OCI-LY7 (cell line): ENCODE measurements at regions of chr1 and their contacts with region 1.

Region 1: GRCh38 chr1:45887156-45887842 is 83.9 kb downstream of the MAST2 start:
- DNase-seq: no peak
- H3K4me3 ChIP-seq: no peak overlapping the region
- H3K27ac ChIP-seq: no peak overlapping the region
- H3K4me1 ChIP-seq: no peaks in the 10 kb centered on the region
- CTCF ChIP-seq: no peak

Region 2: GRCh38 chr1:45906883-45907282 is 19.6 kb after region 1 on chr1:
- CTCF ChIA-PET with region 1: no interaction called
- POLR2A ChIA-PET with region 1: interaction called, 15 read pairs
- intact Hi-C with region 1: no loop called
- DNase-seq: no peak
- H3K4me3 ChIP-seq: no peak overlapping the region
- H3K27ac ChIP-seq: no peak overlapping the region
- H3K4me1 ChIP-seq: no peaks in the 10 kb centered on the region
- CTCF ChIP-seq: no peak

Region 3: DNA sequence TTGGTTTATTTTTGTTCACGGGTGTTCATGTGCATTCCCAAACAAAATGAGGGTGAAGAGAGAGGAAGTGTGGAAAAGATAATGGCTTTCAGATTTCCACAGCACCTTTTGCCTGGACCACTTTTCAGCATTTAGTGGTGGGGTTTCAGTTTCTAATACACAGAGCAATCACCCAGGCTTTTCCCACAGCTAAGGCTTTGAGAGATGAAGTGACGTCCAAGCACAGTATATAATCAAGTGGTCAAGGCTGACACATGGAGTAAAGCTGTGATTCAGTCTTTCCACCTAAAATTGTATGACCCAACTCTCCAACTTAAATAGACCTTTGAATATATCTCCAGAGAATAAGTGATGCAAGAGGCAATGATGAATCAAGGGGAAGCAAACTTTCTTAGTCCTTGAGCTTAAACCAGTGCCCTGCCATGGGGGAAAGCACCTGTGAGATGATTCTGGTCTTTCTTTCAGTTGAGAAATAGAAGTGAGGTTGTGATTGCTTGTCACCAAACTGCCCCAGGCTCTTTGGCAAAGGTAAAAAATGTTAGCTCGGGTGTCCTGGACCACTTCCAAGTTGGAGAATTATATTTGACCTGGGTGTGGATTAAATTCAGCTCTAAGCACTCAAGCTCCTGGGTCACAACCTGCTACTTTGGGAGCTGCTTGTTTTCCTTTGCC is 247.5 kb after region 1 on chr1:
- CTCF ChIA-PET with region 1: no interaction called
- POLR2A ChIA-PET with region 1: no interaction called
- intact Hi-C with region 1: no loop called
- DNase-seq: no peak
- H3K4me3 ChIP-seq: no peak overlapping the region
- H3K27ac ChIP-seq: no peak overlapping the region
- H3K4me1 ChIP-seq: peaks cover 21% of the 10 kb centered on the region
- CTCF ChIP-seq: no peak